K562 (cell line): ENCODE measurements at regions of chr9 and their contacts with region 1.

Region 1: GRCh38 chr9:98263482-98264357 is 8.3 kb upstream of the TBC1D2 start:
- DNase-seq: peak; percentile 76 to 91 (median 79)
- ATAC-seq: peak; percentile 99
- H3K4me3 ChIP-seq: no peak overlapping the region
- H3K27ac ChIP-seq: no peak overlapping the region
- H3K4me1 ChIP-seq: peaks cover 0 to 6% of the 10 kb centered on the region in 2 experiments; a peak in 2 of 5 replicates
- H3K27me3 ChIP-seq: no peaks in the 10 kb centered on the region
- CTCF ChIP-seq: peak; percentile 93 to 95 (median 94)
- EP300 ChIP-seq: no peak
- POLR2A ChIP-seq: no peak
- RAD21 ChIP-seq: peak; percentile 98 to 99

Region 2: DNA sequence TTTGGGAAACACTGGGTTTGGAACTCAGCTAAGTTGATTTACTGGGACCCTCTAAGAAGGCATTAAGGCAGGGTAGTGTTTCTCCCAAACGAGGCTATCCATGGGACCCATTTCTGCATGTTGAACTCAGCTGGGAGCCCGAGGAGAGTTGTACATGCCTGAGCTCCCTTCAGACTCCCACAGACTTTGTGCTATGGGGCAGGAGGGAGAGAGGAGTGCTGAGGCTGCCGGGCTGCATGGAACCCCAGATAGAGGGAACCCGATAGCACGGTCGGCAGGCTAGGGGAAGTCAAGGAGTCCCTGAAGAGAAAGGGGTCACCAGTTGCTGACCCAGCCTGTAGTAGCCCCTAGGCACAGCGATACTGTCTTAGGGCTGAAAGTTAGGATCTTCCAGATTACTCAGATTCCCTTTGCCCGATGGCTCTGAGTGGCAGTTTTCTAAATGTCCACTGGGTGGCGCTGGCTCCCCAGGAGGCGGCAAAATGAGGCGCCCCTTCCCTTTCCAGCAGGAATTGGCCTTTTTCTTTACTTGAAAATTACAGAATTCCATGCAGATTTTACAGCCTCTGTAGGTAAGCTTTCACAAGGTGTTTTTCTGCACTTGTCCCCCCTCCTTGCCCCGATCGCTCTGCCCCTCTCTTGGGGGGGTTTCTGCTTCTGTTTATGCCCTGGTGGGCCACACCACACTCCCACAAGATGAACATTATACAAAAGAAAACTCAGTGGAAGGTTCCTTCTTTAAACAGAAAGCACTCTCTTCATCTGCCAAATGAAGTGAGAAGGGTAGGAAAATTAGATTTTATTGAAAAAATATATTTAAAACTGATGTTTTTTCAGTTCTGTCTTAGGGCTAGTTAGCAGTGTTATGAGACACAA is 189.4 kb before region 1 on chr9:
- CTCF ChIA-PET with region 1: interaction called, 5 read pairs
- POLR2A ChIA-PET with region 1: no interaction called
- in situ Hi-C with region 1: no loop called
- intact Hi-C with region 1: loop called (anchors 1 kb)
- DNase-seq: peak; percentile 62 to 78 (median 68)
- ATAC-seq: peak; percentile 84
- H3K4me3 ChIP-seq: no peak overlapping the region
- H3K27ac ChIP-seq: peak overlapping the region; percentile 4; the same call in 2 of the 3 replicates
- H3K4me1 ChIP-seq: peaks cover 4% of the 10 kb centered on the region in 2 experiments; a peak in 2 of 5 replicates
- H3K27me3 ChIP-seq: no peaks in the 10 kb centered on the region
- CTCF ChIP-seq: peak; percentile 89 to 97 (median 94)
- EP300 ChIP-seq: no peak
- POLR2A ChIP-seq: no peak
- RAD21 ChIP-seq: peak; percentile 78 to 79

Region 3: GRCh38 chr9:98118640-98119601 is 144.8 kb before region 1 on chr9 and contains the start of gene TRIM14:
- CTCF ChIA-PET with region 1: interaction called, 8 read pairs
- POLR2A ChIA-PET with region 1: no interaction called
- in situ Hi-C with region 1: loop called (anchors 5 kb)
- intact Hi-C with region 1: loop called (anchors 1 kb)
- DNase-seq: peak; percentile 83 to 91 (median 88)
- ATAC-seq: peak; percentile 87
- H3K4me3 ChIP-seq: peak within 1 kb of the TSS; percentile 76
- H3K27ac ChIP-seq: peak within 1 kb of the TSS; percentile 67
- H3K4me1 ChIP-seq: peaks cover 14 to 22% of the 10 kb centered on the region in 2 experiments; a peak in 4 of 5 replicates
- H3K27me3 ChIP-seq: no peaks in the 10 kb centered on the region
- CTCF ChIP-seq: peak; percentile 7 to 49 (median 42); a peak in 5 of 6 replicates
- EP300 ChIP-seq: no peak
- POLR2A ChIP-seq: peak; percentile 67
- RAD21 ChIP-seq: peak in 1 of 2 experiments; percentile 65; a peak in 3 of 4 replicates
- polyA plus RNA-seq, gene TRIM14: 7.6 to 8.3 TPM

Region 4: DNA sequence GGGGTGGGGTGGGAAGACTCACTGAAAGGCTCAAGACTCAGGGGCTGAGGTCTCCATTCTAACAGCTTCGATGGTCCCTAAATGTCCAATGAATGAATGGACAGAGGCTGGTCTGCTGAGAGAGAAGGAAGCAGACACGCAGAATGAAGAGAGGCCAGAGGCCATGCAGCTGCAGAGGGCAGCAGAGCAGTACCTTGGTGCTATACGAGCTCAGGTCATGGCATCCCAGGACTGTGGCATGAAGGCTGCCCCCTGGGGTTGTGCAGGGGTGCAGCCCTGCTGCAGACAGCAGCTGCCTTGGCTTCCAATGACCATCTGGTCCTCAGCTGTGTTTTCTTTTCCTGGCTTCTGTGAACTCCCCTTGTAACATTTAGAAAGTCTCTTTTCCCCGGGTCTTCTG is 56.1 kb before region 1 on chr9:
- CTCF ChIA-PET with region 1: interaction called, 36 read pairs
- POLR2A ChIA-PET with region 1: interaction called, 3 read pairs
- in situ Hi-C with region 1: loop called (anchors 5 kb)
- intact Hi-C with region 1: loop called (anchors 1 kb)
- DNase-seq: no peak
- ATAC-seq: no peak
- H3K4me3 ChIP-seq: no peak overlapping the region
- H3K27ac ChIP-seq: no peak overlapping the region
- H3K4me1 ChIP-seq: peaks cover 11 to 22% of the 10 kb centered on the region in 2 experiments; a peak in 4 of 5 replicates
- H3K27me3 ChIP-seq: no peaks in the 10 kb centered on the region
- CTCF ChIP-seq: peak; percentile 41 to 50 (median 43); a peak in 5 of 6 replicates
- EP300 ChIP-seq: no peak
- POLR2A ChIP-seq: no peak
- RAD21 ChIP-seq: peak in 1 of 2 experiments; percentile 42; a peak in 2 of 4 replicates

Region 5: GRCh38 chr9:98248737-98249474 is 14.8 kb before region 1 on chr9:
- CTCF ChIA-PET with region 1: no interaction called
- POLR2A ChIA-PET with region 1: no interaction called
- in situ Hi-C with region 1: no loop called
- intact Hi-C with region 1: loop called (anchors 1 kb)
- DNase-seq: peak; percentile 42 to 87 (median 62)
- ATAC-seq: peak; percentile 84
- H3K4me3 ChIP-seq: no peak overlapping the region
- H3K27ac ChIP-seq: peak overlapping the region; percentile 91
- H3K4me1 ChIP-seq: peaks cover 43 to 44% of the 10 kb centered on the region in 2 experiments
- H3K27me3 ChIP-seq: no peaks in the 10 kb centered on the region
- CTCF ChIP-seq: no peak
- EP300 ChIP-seq: peak; percentile 83
- POLR2A ChIP-seq: peak; percentile 56; the same call in 1 of the 2 replicates
- RAD21 ChIP-seq: no peak

Region 6: DNA sequence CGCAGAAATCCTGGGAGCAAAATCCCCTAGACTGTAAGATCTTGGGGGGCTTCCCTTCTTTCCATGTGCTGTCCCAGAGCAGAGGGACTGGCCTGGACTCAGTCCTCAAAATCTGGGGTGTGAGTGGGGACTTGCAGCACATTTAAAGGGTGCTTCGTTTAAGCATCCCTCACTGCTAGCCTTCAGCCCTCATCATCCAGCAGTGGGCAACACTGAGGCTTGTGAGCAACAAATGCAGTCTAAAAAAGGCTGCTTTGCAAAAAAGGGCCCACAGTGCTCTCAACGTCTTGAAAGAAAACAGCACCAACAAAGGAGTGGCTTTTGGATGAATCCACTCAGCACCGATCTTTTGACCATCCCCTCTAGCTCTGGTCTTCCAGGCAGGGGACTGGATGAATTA is 120.0 kb after region 1 on chr9:
- CTCF ChIA-PET with region 1: no interaction called
- POLR2A ChIA-PET with region 1: no interaction called
- in situ Hi-C with region 1: no loop called
- intact Hi-C with region 1: no loop called
- DNase-seq: peak in 2 of 4 experiments; percentile 33 to 48
- ATAC-seq: peak; percentile 77
- H3K4me3 ChIP-seq: no peak overlapping the region
- H3K27ac ChIP-seq: no peak overlapping the region
- H3K4me1 ChIP-seq: peaks cover 6 to 12% of the 10 kb centered on the region in 2 experiments; a peak in 4 of 5 replicates
- H3K27me3 ChIP-seq: no peaks in the 10 kb centered on the region
- CTCF ChIP-seq: peak; percentile 42 to 52 (median 50)
- EP300 ChIP-seq: no peak
- POLR2A ChIP-seq: no peak
- RAD21 ChIP-seq: peak in 1 of 2 experiments; percentile 60; a peak in 2 of 4 replicates